ENCODE measurements at regions of chr3 and their contacts with region 1.

Region 1: DNA sequence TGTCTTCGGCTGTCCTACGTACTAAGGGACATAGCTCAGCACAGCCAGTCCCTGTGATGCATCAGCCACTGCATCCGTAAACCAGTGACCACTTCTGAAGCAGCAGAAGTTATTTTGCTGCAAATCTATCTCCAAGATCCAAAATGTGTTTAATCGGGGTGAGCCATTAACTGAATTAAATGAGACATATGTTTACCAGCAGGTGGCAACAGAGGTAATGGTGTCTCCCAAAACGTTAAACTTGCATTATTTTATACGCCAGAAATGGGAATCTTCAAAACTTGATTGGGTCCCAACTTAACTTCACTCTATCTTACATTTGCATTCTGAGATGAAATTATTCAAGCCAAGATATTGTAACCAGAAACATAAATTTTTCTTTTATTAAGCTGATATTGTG is 75.3 kb upstream of the BOC start:
- DNase-seq: no peak
- ATAC-seq: no peak
- H3K4me3 ChIP-seq: no peak overlapping the region
- H3K27ac ChIP-seq: no peak overlapping the region
- H3K4me1 ChIP-seq: peaks cover 0 to 5% (median 0%) of the 10 kb centered on the region in 9 donors
- H3K27me3 ChIP-seq: no peaks in the 10 kb centered on the region
- CTCF ChIP-seq: peak; percentile 22 to 74 (median 59)

Region 2: DNA sequence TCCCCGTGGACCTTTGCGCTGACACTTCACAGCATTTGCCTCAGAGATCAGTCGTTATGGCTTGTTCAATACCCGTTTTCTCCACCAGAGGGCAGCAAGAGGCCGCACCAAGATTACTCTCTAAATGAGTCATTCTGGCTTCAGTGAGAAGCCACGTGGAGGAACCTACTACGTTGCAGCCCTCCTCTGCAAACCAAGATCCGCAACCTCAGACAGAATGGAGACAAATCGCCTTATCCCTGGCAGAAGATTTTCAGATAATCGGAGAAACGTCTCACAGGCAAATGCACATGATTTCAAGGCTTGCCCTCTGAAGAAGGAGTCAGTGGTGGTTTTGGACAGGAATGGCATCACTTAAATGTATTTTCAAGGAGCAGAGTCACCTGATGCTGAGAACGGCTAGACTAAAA is 84.8 kb before region 1 on chr3:
- intact Hi-C with region 1: loop called in 4 of 10 experiments (anchors 5 to 10 kb)
- DNase-seq: peak; percentile 60 to 89
- ATAC-seq: peak; percentile 81 to 97 (median 96)
- H3K4me3 ChIP-seq: peak overlapping the region in 1 of 10 donors; percentile 17
- H3K27ac ChIP-seq: no peak overlapping the region
- H3K4me1 ChIP-seq: peaks cover 0 to 32% (median 5%) of the 10 kb centered on the region in 9 donors
- H3K27me3 ChIP-seq: no peaks in the 10 kb centered on the region
- CTCF ChIP-seq: peak; percentile 80 to 98 (median 96)

Region 3: GRCh38 chr3:113057117-113057516 is 79.0 kb before region 1 on chr3:
- intact Hi-C with region 1: loop called in 4 of 10 experiments (anchors 5 to 10 kb)
- DNase-seq: no peak
- ATAC-seq: no peak
- H3K4me3 ChIP-seq: no peak overlapping the region
- H3K27ac ChIP-seq: no peak overlapping the region
- H3K4me1 ChIP-seq: peaks cover 0 to 21% (median 0%) of the 10 kb centered on the region in 9 donors
- H3K27me3 ChIP-seq: no peaks in the 10 kb centered on the region
- CTCF ChIP-seq: no peak

Region 4: DNA sequence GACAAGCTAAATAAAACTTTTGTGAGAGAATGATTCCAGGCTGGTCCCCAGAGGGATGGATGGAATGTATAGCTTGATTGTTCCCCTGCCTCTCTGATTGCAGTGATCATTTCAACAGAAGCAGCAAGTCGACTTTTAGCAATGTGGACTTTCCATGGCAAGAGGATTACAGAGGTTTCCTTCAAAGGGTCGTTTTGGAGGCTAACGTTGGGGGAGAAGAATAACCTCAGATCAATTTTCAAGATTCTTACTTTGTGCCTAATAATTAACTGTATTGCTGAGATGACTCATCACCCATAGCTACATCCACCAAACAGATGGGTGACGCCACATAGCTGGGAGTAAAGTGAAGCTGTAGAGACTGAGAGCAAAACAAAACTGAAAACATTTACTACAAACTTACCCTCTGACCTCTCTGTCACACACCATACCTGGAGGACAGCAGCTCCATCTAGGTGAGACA is 65.4 kb before region 1 on chr3:
- intact Hi-C with region 1: no loop called
- DNase-seq: no peak
- ATAC-seq: no peak
- H3K4me3 ChIP-seq: no peak overlapping the region
- H3K27ac ChIP-seq: no peak overlapping the region
- H3K4me1 ChIP-seq: peaks cover 0 to 9% (median 0%) of the 10 kb centered on the region in 9 donors
- H3K27me3 ChIP-seq: no peaks in the 10 kb centered on the region
- CTCF ChIP-seq: no peak

Region 5: DNA sequence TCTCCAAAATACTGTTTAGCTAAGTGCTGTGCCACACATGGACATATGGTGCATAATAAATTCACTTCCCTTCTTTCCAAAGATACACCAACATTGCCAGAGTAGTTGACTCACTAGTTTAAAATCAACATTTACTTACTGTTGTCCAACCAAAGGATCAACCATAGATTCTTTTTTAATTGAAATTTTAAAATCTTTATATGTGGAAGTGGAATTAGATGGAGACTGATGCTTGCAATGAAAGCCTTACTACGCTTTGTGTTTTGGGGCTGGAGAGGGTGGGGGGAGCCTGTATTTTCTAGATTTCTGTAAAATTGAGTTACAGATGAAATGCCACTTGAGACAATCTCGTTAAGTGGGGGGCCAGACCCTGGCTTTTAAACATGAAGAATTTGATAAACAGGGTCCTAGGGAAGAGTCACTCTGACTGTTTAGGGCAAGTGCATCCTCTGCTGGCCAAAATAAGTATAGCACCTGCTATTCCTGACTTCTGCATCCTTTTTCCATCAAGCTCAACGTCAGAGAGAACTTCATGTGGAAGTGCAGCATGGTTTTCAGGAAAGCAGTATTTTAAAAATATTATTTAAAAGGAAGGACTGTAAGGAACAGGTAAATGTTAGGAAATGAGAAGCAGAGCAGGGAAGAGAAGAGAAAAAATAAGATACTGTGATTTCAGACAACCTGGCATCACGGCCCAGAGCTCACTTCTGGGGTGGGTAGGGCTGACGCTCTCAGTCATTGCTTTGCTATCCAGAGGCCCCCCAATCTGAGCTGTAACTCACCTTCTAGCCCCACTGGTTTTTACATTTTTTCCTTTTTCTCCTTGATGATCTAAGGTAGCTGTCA is 152.0 kb after region 1 on chr3:
- intact Hi-C with region 1: loop called (anchors 1 to 5 kb)
- DNase-seq: peak in 1 of 2 donors; percentile 70
- ATAC-seq: peak in 7 of 8 donors; percentile 44 to 60 (median 55)
- H3K4me3 ChIP-seq: no peak overlapping the region
- H3K27ac ChIP-seq: peak overlapping the region in 1 of 10 donors; percentile 46
- H3K4me1 ChIP-seq: peaks cover 0 to 6% (median 0%) of the 10 kb centered on the region in 9 donors
- H3K27me3 ChIP-seq: no peaks in the 10 kb centered on the region
- CTCF ChIP-seq: peak; percentile 92 to 100 (median 97)

Measured in heart right ventricle (tissue), 16 donors.